ENCODE measurements at regions of chr9 and their contacts with region 1.

Region 1: GRCh38 chr9:130866474-130866965 is 30.1 kb downstream of the QRFP start:
- DNase-seq: peak in 4 of 5 donors; percentile 62 to 72 (median 66)
- H3K4me3 ChIP-seq: no peak overlapping the region
- H3K27ac ChIP-seq: no peak overlapping the region
- H3K4me1 ChIP-seq: peaks cover 10% of the 10 kb centered on the region
- H3K27me3 ChIP-seq: no peaks in the 10 kb centered on the region
- CTCF ChIP-seq: peak; percentile 33 to 74 (median 68)
- EP300 ChIP-seq: no peak
- POLR2A ChIP-seq: no peak

Region 2: DNA sequence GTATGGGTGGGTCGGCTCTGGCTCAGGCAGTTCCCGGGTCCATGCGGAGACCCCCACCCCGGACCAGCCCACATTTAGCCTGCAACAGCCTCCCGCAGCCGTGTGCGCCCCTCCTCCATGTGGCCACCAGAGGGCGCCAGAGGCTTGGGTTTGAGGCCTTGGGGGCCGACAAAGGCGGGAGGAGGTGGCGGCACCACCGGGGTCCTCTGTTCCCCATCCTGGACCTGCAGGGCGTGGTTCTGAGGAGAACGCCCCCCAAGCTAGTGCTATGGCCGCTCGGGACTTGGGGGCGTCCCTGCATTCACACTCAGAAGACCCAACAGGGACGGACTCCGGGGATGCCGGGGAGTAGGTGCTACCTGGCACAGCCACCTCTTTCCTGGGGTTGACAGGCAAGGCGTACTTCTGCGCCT is 405.3 kb before region 1 on chr9:
- intact Hi-C with region 1: loop called in 2 of 4 experiments (anchors 5 to 10 kb)
- DNase-seq: peak; percentile 46 to 79 (median 71)
- H3K4me3 ChIP-seq: no peak overlapping the region
- H3K27ac ChIP-seq: no peak overlapping the region
- H3K4me1 ChIP-seq: no peaks in the 10 kb centered on the region
- H3K27me3 ChIP-seq: no peaks in the 10 kb centered on the region
- CTCF ChIP-seq: peak; percentile 73 to 87 (median 84)
- EP300 ChIP-seq: no peak
- POLR2A ChIP-seq: no peak

Region 3: GRCh38 chr9:130467371-130467770 is 399.1 kb before region 1 on chr9:
- intact Hi-C with region 1: loop called in 2 of 4 experiments (anchors 5 to 10 kb)
- DNase-seq: no peak
- H3K4me3 ChIP-seq: no peak overlapping the region
- H3K27ac ChIP-seq: no peak overlapping the region
- H3K4me1 ChIP-seq: no peaks in the 10 kb centered on the region
- H3K27me3 ChIP-seq: no peaks in the 10 kb centered on the region
- CTCF ChIP-seq: no peak
- EP300 ChIP-seq: no peak
- POLR2A ChIP-seq: no peak

Region 4: GRCh38 chr9:130707225-130707976 is 159.1 kb before region 1 on chr9:
- intact Hi-C with region 1: loop called (anchors 2 to 5 kb)
- DNase-seq: peak; percentile 44 to 80 (median 61)
- H3K4me3 ChIP-seq: no peak overlapping the region
- H3K27ac ChIP-seq: no peak overlapping the region
- H3K4me1 ChIP-seq: no peaks in the 10 kb centered on the region
- H3K27me3 ChIP-seq: no peaks in the 10 kb centered on the region
- CTCF ChIP-seq: peak; percentile 66 to 80 (median 75)
- EP300 ChIP-seq: no peak
- POLR2A ChIP-seq: no peak

Region 5: GRCh38 chr9:131046581-131047202 is 180.2 kb after region 1 on chr9:
- intact Hi-C with region 1: loop called in 1 of 4 experiments (anchors 5 kb)
- DNase-seq: peak; percentile 38 to 79 (median 50)
- H3K4me3 ChIP-seq: no peak overlapping the region
- H3K27ac ChIP-seq: no peak overlapping the region
- H3K4me1 ChIP-seq: no peaks in the 10 kb centered on the region
- H3K27me3 ChIP-seq: no peaks in the 10 kb centered on the region
- CTCF ChIP-seq: peak; percentile 54 to 72 (median 65)
- EP300 ChIP-seq: no peak
- POLR2A ChIP-seq: no peak

Measured in ovary (tissue), 10 donors.